ENCODE measurements at regions of chr21 and their contacts with region 1.

Region 1: GRCh38 chr21:45478115-45478801 is 64.0 kb downstream of the SLC19A1 start:
- DNase-seq: peak; percentile 65 to 91 (median 78)
- ATAC-seq: peak; percentile 78
- H3K4me3 ChIP-seq: peak overlapping the region; percentile 54
- H3K4me3 Mint-ChIP-seq: peak overlapping the region; percentile 83
- H3K27ac ChIP-seq: peak overlapping the region; percentile 89 to 95
- H3K27ac Mint-ChIP-seq: peak overlapping the region; percentile 95
- H3K4me1 ChIP-seq: peaks cover 79% of the 10 kb centered on the region
- H3K4me1 Mint-ChIP-seq: peaks cover 43% of the 10 kb centered on the region
- H3K27me3 ChIP-seq: no peaks in the 10 kb centered on the region
- H3K27me3 Mint-ChIP-seq: no peaks in the 10 kb centered on the region
- CTCF ChIP-seq: peak; percentile 91

Region 2: DNA sequence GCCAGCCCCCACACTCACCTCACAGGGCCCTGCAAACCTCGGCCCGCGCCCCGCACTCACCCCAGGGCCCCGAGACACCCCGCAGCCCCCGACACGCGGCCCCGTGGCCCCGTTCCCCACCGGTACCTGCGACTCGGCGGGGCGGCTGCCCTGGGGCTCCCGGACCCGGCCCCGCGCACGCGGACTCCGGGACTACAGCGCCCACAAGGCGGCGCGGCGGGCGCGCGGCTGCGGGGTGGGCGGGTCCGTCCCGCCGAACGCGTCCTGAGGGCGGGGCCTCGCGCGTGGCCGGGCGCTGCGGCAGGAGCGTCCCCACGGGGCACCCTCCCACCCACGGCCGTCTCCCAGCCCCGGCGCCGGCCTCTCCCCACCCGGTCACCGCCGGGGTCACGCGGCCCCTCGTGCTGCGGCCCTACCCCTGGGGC is 64.0 kb after region 1 on chr21 and contains the start of gene SLC19A1:
- CTCF ChIA-PET with region 1: no interaction called
- POLR2A ChIA-PET with region 1: no interaction called
- intact Hi-C with region 1: loop called (anchors 2 to 5 kb)
- DNase-seq: peak; percentile 48 to 90 (median 68)
- ATAC-seq: peak; percentile 83
- H3K4me3 ChIP-seq: peak within 1 kb of the TSS; percentile 46
- H3K4me3 Mint-ChIP-seq: peak within 1 kb of the TSS; percentile 86
- H3K27ac ChIP-seq: peak within 1 kb of the TSS in 1 of 2 donors; percentile 55
- H3K27ac Mint-ChIP-seq: peak within 1 kb of the TSS; percentile 80
- H3K4me1 ChIP-seq: peaks cover 23% of the 10 kb centered on the region
- H3K4me1 Mint-ChIP-seq: peaks cover 24% of the 10 kb centered on the region
- H3K27me3 ChIP-seq: no peaks in the 10 kb centered on the region
- H3K27me3 Mint-ChIP-seq: no peaks in the 10 kb centered on the region
- CTCF ChIP-seq: no peak
- total RNA-seq, gene SLC19A1: 11.5 to 12.0 TPM

Region 3: DNA sequence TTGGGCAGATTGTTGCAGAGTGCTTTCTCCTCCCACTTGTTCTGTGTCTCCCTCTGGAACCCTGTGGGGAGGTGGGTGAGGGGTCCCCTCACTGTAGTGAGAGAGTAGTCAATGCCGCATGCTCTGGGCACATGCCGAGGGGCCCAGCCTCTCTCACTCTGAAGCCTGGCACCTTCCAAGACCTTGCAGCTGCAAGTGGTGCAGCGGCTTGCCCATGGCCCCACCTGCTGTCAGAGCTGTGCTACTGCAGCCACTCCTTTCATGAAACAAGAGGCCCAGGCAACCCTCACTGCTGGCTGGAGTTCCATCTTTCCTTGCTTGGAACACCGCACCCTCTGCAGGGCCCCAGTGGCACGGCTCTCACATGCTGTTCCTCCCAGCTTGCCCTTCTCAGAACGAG is 444.9 kb after region 1 on chr21:
- CTCF ChIA-PET with region 1: no interaction called
- POLR2A ChIA-PET with region 1: no interaction called
- intact Hi-C with region 1: loop called in 1 of 2 experiments (anchors 1 kb)
- DNase-seq: peak; percentile 56 to 81 (median 69)
- ATAC-seq: peak; percentile 98
- H3K4me3 ChIP-seq: no peak overlapping the region
- H3K4me3 Mint-ChIP-seq: no peak overlapping the region
- H3K27ac ChIP-seq: no peak overlapping the region
- H3K27ac Mint-ChIP-seq: no peak overlapping the region
- H3K4me1 ChIP-seq: peaks cover 18% of the 10 kb centered on the region
- H3K4me1 Mint-ChIP-seq: peaks cover 4% of the 10 kb centered on the region
- H3K27me3 ChIP-seq: no peaks in the 10 kb centered on the region
- H3K27me3 Mint-ChIP-seq: no peaks in the 10 kb centered on the region
- CTCF ChIP-seq: peak; percentile 75